ENCODE measurements at regions of chr14 and their contacts with region 1.

Region 1: DNA sequence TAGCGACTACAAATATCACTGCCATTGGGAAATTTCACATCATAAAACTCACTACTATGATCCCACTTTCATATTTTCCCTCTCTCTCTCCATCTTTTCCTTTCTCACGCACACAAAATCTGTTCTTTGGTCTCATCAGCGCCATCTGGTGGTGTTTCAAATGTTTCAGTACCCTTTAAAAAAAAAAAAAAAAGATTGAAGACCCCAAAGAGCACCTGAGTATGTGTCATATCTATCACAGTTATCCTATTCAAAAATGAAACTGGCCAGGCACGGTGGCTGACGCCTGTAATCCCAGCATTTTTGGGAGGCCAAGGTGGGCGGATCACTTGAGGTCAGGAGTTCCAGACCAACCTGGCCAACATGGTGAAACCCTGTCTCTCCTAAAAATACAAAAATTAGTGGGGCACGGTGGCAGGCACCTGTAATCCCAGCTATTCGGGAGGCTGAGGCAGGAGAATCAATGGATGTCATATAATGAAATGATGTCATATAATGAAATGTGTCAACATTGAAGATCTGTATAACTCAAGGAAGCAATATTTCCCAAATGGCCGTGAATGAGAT is 72.4 kb downstream of the TTC9 start:
- DNase-seq: peak; percentile 82
- H3K4me3 Mint-ChIP-seq: no peak overlapping the region
- H3K27ac Mint-ChIP-seq: no peak overlapping the region
- H3K4me1 Mint-ChIP-seq: peaks cover 3% of the 10 kb centered on the region
- H3K27me3 Mint-ChIP-seq: peaks cover 10% of the 10 kb centered on the region

Region 2: GRCh38 chr14:69818757-69819191 is 895.4 kb before region 1 on chr14:
- intact Hi-C with region 1: loop called (anchors 2 kb)
- DNase-seq: peak; percentile 92
- H3K4me3 Mint-ChIP-seq: no peak overlapping the region
- H3K27ac Mint-ChIP-seq: no peak overlapping the region
- H3K4me1 Mint-ChIP-seq: peaks cover 4% of the 10 kb centered on the region
- H3K27me3 Mint-ChIP-seq: peaks cover 10% of the 10 kb centered on the region

Region 3: GRCh38 chr14:70622111-70622712 is 91.9 kb before region 1 on chr14:
- intact Hi-C with region 1: loop called (anchors 1 kb)
- DNase-seq: peak; percentile 89
- H3K4me3 Mint-ChIP-seq: no peak overlapping the region
- H3K27ac Mint-ChIP-seq: no peak overlapping the region
- H3K4me1 Mint-ChIP-seq: no peaks in the 10 kb centered on the region
- H3K27me3 Mint-ChIP-seq: peaks cover 16% of the 10 kb centered on the region

Region 4: GRCh38 chr14:70640938-70641547 is 73.1 kb before region 1 on chr14:
- intact Hi-C with region 1: loop called (anchors 5 kb)
- DNase-seq: peak; percentile 82
- H3K4me3 Mint-ChIP-seq: peak overlapping the region; percentile 94
- H3K27ac Mint-ChIP-seq: peak overlapping the region; percentile 94
- H3K4me1 Mint-ChIP-seq: peaks cover 39% of the 10 kb centered on the region
- H3K27me3 Mint-ChIP-seq: peaks cover 2% of the 10 kb centered on the region

Region 5: DNA sequence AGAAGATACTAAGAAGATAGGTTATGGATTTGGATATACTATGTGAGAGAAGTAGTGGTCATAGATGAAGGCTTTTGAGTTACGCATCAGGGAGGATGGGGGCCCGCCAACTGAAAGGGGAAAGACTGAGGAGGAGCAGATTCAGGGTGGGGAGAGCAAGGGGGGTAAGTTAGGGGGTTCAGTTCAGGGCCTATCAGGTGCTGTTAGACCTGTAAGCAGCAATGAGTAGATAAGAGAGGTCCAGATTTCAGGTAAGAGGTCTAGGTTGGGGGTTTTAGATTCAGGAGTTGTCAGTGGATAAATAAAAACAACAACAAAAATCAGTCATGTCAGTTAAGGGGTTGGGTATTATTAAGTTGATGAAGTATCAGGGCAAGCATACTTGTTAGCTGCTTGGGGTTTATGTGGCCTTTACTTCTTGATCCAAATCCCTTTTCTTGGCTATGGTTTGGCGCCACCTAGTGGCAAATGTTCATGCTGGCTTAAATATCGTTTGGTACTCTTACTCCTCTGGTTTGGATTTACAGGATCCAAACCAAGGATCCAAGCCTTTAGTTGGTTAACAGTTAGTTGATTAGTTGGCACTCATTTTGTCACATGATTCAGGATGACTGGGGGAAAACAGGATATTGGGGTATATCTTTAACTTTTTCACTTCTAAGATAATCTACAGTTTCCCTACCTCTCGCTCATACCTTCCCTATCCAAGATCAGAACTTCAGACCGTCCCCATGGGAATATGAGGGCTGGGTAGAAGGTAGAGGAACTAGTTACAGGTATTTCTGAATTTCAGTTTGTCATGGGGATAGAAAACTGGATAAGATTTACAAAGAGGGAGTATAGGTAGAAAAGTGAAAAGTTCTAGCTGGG is 258.2 kb after region 1 on chr14:
- intact Hi-C with region 1: loop called (anchors 2 kb)
- DNase-seq: peak; percentile 94
- H3K4me3 Mint-ChIP-seq: no peak overlapping the region
- H3K27ac Mint-ChIP-seq: peak overlapping the region; percentile 17
- H3K4me1 Mint-ChIP-seq: peaks cover 18% of the 10 kb centered on the region
- H3K27me3 Mint-ChIP-seq: no peaks in the 10 kb centered on the region

Measured in activated CD4-positive, alpha-beta T cell treated with anti-CD3 and anti-CD28 coated beads, Interleukin-2, amount 10 ng/mL, durations not matched to agents 24 days and 14 days (primary cell).